ENCODE measurements at regions of chr20 and their contacts with region 1.

Region 1: DNA sequence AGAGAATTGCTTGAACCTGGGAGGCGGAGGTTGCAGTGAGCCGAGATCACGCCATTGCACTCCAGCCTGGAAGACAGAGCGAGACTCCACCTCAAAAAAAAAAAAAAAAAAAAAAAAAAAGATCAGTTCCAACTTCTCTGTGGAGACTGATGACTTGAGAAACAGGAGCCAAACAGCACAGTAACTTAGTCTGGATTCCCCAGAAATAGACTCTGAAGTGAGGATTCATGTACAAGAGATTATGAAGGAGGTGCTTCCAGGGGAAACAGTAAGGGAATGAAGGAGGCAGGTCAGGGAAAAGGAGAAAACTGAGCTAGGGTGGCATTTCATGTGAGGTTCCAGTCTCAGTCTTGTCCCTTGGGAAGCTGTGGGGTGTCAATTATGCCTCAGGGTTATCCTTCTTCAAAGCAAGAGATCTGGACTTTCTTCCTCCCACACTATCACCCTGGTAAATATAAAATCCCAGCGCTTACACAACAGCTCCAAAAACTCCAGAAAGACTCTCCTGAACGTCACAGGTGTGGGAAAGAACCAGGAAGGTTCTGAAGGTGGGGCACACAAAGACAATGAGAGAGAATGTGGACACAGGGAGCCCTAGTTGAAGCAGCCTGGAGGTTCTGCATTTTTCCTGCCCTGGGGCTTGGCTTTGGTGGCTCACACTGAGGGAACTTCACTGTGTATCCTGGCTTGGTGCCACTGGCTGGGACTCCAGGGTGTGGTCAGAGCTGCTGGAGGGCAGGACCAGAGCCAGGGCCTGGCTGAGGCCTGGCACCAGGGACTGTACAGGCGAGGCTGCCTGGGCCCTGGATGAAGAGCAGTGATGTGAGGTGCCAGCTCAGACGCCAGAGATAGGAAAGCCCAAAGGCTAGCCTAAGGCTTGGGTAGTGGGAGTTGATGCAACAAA is 46.8 kb downstream of the PCNA start:
- DNase-seq: no peak
- ATAC-seq: peak; percentile 2; the same call in 1 of the 3 replicates
- H3K4me3 ChIP-seq: no peak overlapping the region
- H3K27ac ChIP-seq: no peak overlapping the region
- H3K4me1 ChIP-seq: peaks cover 22% of the 10 kb centered on the region
- H3K27me3 ChIP-seq: no peaks in the 10 kb centered on the region; a peak in 1 of 4 replicates
- CTCF ChIP-seq: no peak
- EP300 ChIP-seq: no peak
- POLR2A ChIP-seq: no peak
- RAD21 ChIP-seq: no peak

Region 2: DNA sequence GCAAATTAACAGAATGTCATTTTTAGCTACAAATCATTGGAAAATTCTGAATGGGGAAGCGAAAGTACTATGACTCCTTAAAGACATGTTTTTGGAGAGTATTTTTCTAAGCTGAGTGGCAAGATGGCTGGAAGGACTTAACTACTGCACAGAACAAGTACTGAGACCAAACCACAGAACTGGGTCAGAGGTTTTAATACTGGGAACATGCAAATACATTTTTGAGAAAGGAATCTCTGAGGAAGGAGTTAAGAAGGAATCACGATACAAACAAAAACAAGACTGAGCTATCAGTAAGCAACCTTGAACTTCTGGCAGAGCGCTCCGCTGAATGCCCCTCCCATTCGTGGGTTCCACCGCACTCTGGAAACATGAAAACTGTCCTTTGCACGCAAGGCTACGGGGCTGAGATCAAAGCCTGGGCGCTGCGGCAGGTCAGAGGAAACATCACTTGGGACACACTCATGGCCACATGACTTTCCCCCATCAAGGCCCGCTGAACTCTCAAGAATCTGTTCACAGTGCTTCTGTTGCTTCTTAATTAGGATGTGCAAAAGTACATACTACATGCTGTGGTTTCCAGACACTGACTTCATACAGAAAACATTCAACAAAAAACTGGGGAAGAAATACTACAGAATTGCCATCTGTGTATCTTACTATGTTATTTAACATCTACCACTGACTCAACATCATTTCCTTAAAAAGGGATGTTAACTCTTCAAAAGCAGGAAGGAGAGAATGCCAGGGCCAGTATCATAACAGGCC is 99.5 kb before region 1 on chr20:
- CTCF ChIA-PET with region 1: interaction called, 5 read pairs
- POLR2A ChIA-PET with region 1: interaction called, 9 read pairs
- RAD21 ChIA-PET with region 1: interaction called, 12 read pairs
- SMC1A ChIA-PET with region 1: interaction called, 20 read pairs
- in situ Hi-C with region 1: no loop called
- intact Hi-C with region 1: loop called (anchors 1 kb)
- DNase-seq: peak; percentile 85
- ATAC-seq: peak; percentile 94
- H3K4me3 ChIP-seq: peak overlapping the region; percentile 42
- H3K27ac ChIP-seq: peak overlapping the region; percentile 76
- H3K4me1 ChIP-seq: peaks cover 4% of the 10 kb centered on the region
- H3K27me3 ChIP-seq: no peaks in the 10 kb centered on the region
- CTCF ChIP-seq: no peak
- EP300 ChIP-seq: peak; percentile 94 to 97
- POLR2A ChIP-seq: peak; percentile 45; the same call in 1 of the 2 replicates
- RAD21 ChIP-seq: 0 out of 2 replicates have a peak, but pooled peaks have one; percentile 12

Region 3: DNA sequence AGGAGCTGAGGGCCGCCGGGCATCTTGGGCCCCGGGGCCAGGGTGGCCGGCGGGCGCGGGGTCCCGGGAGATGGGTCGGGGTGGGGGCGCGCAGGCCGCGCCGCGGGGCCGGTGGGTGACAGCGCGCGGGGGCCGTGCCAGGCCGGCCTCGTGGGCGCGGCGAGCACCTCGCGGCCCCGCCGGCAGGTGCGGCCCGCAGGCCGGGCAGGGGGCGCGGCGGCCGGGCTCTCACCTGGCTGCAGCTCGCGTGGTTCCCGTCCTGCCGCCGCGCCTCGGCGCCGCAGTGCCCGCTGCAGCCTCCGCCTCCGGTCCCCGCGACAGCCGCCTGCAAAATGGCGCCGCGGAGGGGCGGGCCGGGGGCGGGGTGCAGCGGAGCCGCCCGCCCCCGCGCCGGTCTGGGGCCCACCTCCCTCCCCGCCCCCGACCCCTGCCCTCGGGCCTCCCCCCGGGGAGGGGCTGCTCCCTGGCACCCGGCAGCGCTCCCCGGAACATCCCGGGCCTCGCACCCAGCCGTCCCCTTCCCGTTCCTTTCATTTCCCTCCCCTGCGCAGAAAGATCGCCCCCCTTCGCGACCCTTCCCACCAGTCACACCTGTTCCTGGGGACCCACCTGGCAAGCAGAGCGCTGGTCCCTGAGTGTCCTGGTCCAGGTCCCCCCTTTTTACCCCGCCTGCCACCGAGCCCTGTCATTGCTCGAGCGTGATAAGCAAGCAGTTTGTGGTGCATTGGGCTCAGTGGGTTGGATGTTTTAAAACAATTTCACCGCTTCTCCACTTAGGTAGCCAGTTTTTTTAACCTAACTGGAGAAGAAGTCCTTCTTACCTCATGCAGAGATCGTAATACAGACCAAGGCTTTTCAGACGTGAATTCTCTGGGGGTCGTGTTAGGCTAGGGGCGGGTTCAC is 71.6 kb before region 1 on chr20 and contains the start of gene SLC23A2:
- CTCF ChIA-PET with region 1: interaction called, 6 read pairs
- POLR2A ChIA-PET with region 1: no interaction called
- RAD21 ChIA-PET with region 1: interaction called, 15 read pairs
- SMC1A ChIA-PET with region 1: interaction called, 30 read pairs
- in situ Hi-C with region 1: no loop called
- intact Hi-C with region 1: no loop called
- DNase-seq: no peak
- ATAC-seq: peak; percentile 59
- H3K4me3 ChIP-seq: peak within 1 kb of the TSS; percentile 94
- H3K27ac ChIP-seq: no peak within 1 kb of the TSS
- H3K4me1 ChIP-seq: peaks cover 11% of the 10 kb centered on the region
- H3K27me3 ChIP-seq: no peaks in the 10 kb centered on the region; a peak in 1 of 4 replicates
- CTCF ChIP-seq: no peak
- EP300 ChIP-seq: no peak
- POLR2A ChIP-seq: peak; percentile 68
- RAD21 ChIP-seq: no peak
- polyA plus RNA-seq, gene SLC23A2: 4.4 to 5.9 TPM

Region 4: DNA sequence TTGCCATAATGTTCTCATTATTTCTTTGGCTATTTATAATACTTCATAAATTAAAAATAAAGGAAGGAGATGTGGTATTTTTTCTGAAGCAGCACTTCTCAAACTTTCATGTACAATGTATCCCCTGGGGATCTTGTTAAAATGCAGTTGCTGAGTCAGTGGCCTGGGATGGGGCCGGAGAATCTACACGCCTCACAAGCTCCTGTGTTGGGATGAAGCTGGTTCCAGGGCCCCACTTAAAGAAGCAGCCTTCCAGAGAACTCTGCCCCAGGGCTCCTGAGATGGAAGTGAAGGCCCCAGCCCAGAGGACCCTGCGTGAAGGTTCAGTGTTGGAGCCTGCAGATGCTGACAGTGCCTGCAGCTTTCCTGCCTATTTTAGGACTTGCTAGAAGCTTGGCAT is 31.6 kb before region 1 on chr20:
- CTCF ChIA-PET with region 1: interaction called, 4 read pairs
- POLR2A ChIA-PET with region 1: interaction called, 27 read pairs
- RAD21 ChIA-PET with region 1: interaction called, 11 read pairs
- SMC1A ChIA-PET with region 1: interaction called, 83 read pairs
- in situ Hi-C with region 1: no loop called
- intact Hi-C with region 1: loop called (anchors 2 kb)
- DNase-seq: no peak
- ATAC-seq: no peak
- H3K4me3 ChIP-seq: no peak overlapping the region
- H3K27ac ChIP-seq: no peak overlapping the region
- H3K4me1 ChIP-seq: peaks cover 3% of the 10 kb centered on the region; the same call in 1 of the 2 replicates
- H3K27me3 ChIP-seq: no peaks in the 10 kb centered on the region; a peak in 1 of 4 replicates
- CTCF ChIP-seq: no peak
- EP300 ChIP-seq: no peak
- POLR2A ChIP-seq: no peak
- RAD21 ChIP-seq: no peak

Region 5: DNA sequence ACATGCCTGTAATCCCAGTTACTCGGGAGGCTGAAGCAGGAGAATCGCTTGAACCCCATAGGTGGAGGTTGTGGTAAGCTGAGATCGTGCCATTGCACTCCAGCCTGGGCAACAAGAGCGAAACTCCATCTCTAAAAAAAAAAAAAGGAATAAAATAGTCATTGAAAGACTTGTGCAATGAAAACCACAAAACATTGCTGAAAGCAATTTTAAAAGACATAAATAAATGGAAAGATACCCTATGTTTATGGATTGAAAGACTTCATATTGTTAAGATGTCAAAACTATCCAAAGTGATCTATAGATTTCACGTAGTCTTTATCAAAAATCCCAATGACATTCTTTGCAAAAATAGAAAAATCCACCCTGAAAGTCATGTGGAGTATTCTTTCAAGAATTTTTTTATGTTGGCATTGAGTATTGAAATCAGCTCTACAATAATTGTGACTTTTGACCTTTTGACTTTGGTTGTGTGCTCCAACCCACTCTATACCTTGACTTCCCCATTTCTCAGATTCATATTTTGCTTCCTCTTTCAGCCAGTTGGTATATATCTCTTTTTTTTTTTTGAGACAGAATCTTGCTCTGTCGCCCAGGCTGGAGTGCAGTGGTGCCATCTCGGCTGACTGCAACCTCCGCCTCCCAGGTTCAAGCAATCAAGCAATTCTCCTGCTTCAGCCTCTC is 26.2 kb before region 1 on chr20:
- CTCF ChIA-PET with region 1: interaction called, 5 read pairs
- POLR2A ChIA-PET with region 1: interaction called, 6 read pairs
- RAD21 ChIA-PET with region 1: interaction called, 4 read pairs
- SMC1A ChIA-PET with region 1: interaction called, 83 read pairs
- in situ Hi-C with region 1: no loop called
- intact Hi-C with region 1: no loop called
- DNase-seq: no peak
- ATAC-seq: peak; percentile 89
- H3K4me3 ChIP-seq: no peak overlapping the region
- H3K27ac ChIP-seq: no peak overlapping the region
- H3K4me1 ChIP-seq: no peaks in the 10 kb centered on the region
- H3K27me3 ChIP-seq: no peaks in the 10 kb centered on the region; a peak in 1 of 4 replicates
- CTCF ChIP-seq: no peak
- EP300 ChIP-seq: no peak
- POLR2A ChIP-seq: no peak
- RAD21 ChIP-seq: no peak

Region 6: GRCh38 chr20:5056801-5057599 is 16.0 kb before region 1 on chr20:
- CTCF ChIA-PET with region 1: interaction called, 29 read pairs
- POLR2A ChIA-PET with region 1: interaction called, 11 read pairs
- RAD21 ChIA-PET with region 1: interaction called, 21 read pairs
- SMC1A ChIA-PET with region 1: interaction called, 65 read pairs
- in situ Hi-C with region 1: no loop called
- intact Hi-C with region 1: loop called (anchors 2 kb)
- DNase-seq: peak; percentile 38
- ATAC-seq: peak; percentile 97
- H3K4me3 ChIP-seq: no peak overlapping the region
- H3K27ac ChIP-seq: no peak overlapping the region
- H3K4me1 ChIP-seq: peaks cover 4% of the 10 kb centered on the region; the same call in 1 of the 2 replicates
- H3K27me3 ChIP-seq: peaks cover 0 to 8% of the 10 kb centered on the region in 2 experiments; a peak in 1 of 4 replicates
- CTCF ChIP-seq: peak; percentile 43 to 56 (median 53)
- EP300 ChIP-seq: no peak
- POLR2A ChIP-seq: no peak
- RAD21 ChIP-seq: peak; percentile 48

Region 7: GRCh38 chr20:5090191-5090590 is 17.2 kb after region 1 on chr20:
- CTCF ChIA-PET with region 1: interaction called, 7 read pairs
- POLR2A ChIA-PET with region 1: interaction called, 13 read pairs
- RAD21 ChIA-PET with region 1: interaction called, 6 read pairs
- SMC1A ChIA-PET with region 1: interaction called, 15 read pairs
- in situ Hi-C with region 1: no loop called
- intact Hi-C with region 1: no loop called
- DNase-seq: no peak
- ATAC-seq: peak; percentile 93
- H3K4me3 ChIP-seq: no peak overlapping the region
- H3K27ac ChIP-seq: no peak overlapping the region
- H3K4me1 ChIP-seq: no peaks in the 10 kb centered on the region
- H3K27me3 ChIP-seq: no peaks in the 10 kb centered on the region
- CTCF ChIP-seq: no peak
- EP300 ChIP-seq: peak; percentile 64 to 72; a peak in 2 of 4 replicates
- POLR2A ChIP-seq: no peak
- RAD21 ChIP-seq: no peak

Region 8: GRCh38 chr20:5146871-5147592 is 74.0 kb after region 1 on chr20:
- CTCF ChIA-PET with region 1: no interaction called
- POLR2A ChIA-PET with region 1: no interaction called
- RAD21 ChIA-PET with region 1: no interaction called
- SMC1A ChIA-PET with region 1: no interaction called
- in situ Hi-C with region 1: no loop called
- intact Hi-C with region 1: no loop called
- DNase-seq: no peak
- ATAC-seq: peak; percentile 41
- H3K4me3 ChIP-seq: no peak overlapping the region
- H3K27ac ChIP-seq: peak overlapping the region; percentile 35; the same call in 1 of the 2 replicates
- H3K4me1 ChIP-seq: peaks cover 27% of the 10 kb centered on the region
- H3K27me3 ChIP-seq: no peaks in the 10 kb centered on the region
- CTCF ChIP-seq: no peak
- EP300 ChIP-seq: no peak
- POLR2A ChIP-seq: no peak
- RAD21 ChIP-seq: no peak